A549 (cell line): ENCODE measurements at regions of chr21 and their contacts with region 1.

Region 1: GRCh38 chr21:38355992-38356797 is 99.4 kb downstream of the KCNJ15 start:
- DNase-seq: peak; percentile 58 to 66
- ATAC-seq: peak; percentile 83 to 93; a peak in 5 of 6 replicates
- H3K4me3 ChIP-seq: no peak overlapping the region
- H3K27ac ChIP-seq: peak overlapping the region; percentile 84 to 86
- H3K4me1 ChIP-seq: peaks cover 24% of the 10 kb centered on the region
- CTCF ChIP-seq: peak; percentile 80
- EP300 ChIP-seq: no peak
- POLR2A ChIP-seq: no peak
- RAD21 ChIP-seq: peak; percentile 97 to 98

Region 2: GRCh38 chr21:37563641-37564340 is 792.4 kb before region 1 on chr21:
- CTCF ChIA-PET with region 1: interaction called, 4 read pairs
- POLR2A ChIA-PET with region 1: interaction called, 14 read pairs
- DNase-seq: peak; percentile 66 to 93
- ATAC-seq: peak; percentile 81 to 91
- H3K4me3 ChIP-seq: peak overlapping the region; percentile 61
- H3K27ac ChIP-seq: peak overlapping the region; percentile 96 to 98
- H3K4me1 ChIP-seq: peaks cover 21% of the 10 kb centered on the region
- CTCF ChIP-seq: 0 out of 3 replicates have a peak, but pooled peaks have one; percentile 20
- EP300 ChIP-seq: no peak
- POLR2A ChIP-seq: peak; percentile 76
- RAD21 ChIP-seq: peak in 1 of 2 experiments; percentile 21; a peak in 1 of 5 replicates

Region 3: DNA sequence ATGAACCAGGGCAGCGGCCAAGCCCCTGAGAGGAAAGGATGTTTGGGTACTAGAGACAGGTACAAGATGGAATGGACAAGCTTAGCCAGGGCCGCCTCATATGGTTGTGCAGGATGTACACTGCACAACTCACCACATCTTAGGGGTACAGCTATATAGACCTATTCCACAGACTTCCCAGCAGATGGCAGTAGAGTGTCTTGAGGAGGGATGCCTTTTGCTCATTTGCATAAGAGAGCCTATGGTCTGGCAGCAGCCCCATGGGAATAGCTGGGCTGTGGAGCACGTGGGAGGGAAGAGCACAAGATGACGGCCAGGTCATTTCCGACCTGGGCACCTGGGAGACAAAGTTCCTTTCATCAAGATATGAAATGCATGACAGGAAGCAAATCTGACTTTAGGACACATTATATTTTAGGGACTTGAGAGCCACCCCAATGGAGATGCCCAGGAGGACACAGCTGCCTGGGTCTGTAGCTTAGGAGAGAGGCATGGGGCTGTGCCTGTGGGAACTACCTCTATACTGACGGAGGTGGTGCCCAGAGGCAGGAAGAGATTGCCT is 655.5 kb before region 1 on chr21:
- CTCF ChIA-PET with region 1: interaction called, 17 read pairs
- POLR2A ChIA-PET with region 1: no interaction called
- DNase-seq: peak; percentile 63 to 84
- ATAC-seq: peak; percentile 87 to 98
- H3K4me3 ChIP-seq: no peak overlapping the region
- H3K27ac ChIP-seq: peak overlapping the region; percentile 38 to 70; a peak in 4 of 6 replicates
- H3K4me1 ChIP-seq: peaks cover 9% of the 10 kb centered on the region; the same call in 2 of the 3 replicates
- CTCF ChIP-seq: peak; percentile 54
- EP300 ChIP-seq: no peak
- POLR2A ChIP-seq: no peak
- RAD21 ChIP-seq: peak; percentile 69

Region 4: DNA sequence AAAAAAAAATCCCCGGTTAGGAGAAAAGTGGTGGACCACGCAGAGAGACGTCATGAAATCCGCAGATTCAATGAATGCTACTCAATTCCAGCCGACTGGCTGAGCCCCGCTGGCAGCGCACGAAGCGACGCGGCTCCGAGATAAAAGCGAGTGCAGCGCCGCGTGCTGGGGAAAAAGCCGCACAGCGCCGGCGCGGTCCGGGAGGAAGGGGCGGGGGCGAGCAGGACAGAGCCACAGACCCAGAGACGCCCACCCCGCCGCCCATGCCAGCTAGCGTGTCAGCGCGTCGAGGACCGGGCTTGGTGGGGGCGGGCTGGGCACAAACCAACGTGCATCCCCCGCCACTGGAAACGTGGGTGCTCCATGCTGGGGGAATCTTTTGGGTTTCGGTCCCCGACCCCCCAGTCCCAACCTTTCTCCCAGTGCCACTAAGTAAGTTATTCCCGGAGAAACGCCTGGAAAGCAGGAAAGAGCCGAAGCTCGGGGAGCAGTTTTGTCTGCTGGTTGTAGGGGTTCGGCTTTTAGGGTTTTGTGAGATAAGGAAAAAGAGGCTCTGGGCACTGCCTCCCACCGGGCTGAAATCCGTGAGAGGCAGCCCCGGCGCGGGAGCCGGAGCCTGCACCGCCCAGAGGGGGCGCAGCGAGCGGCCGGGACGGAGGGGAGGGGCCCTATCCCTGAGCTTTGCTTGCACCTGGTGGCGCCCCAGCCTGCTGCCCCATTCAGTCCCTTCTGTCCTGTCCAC is 439.7 kb before region 1 on chr21 and contains the start of gene KCNJ6:
- CTCF ChIA-PET with region 1: interaction called, 14 read pairs
- POLR2A ChIA-PET with region 1: interaction called, 5 read pairs
- DNase-seq: peak; percentile 46 to 58
- ATAC-seq: peak; percentile 92
- H3K4me3 ChIP-seq: peak within 1 kb of the TSS; percentile 59
- H3K27ac ChIP-seq: peak within 1 kb of the TSS; percentile 90 to 91
- H3K4me1 ChIP-seq: peaks cover 46% of the 10 kb centered on the region
- CTCF ChIP-seq: peak; percentile 37
- EP300 ChIP-seq: no peak
- POLR2A ChIP-seq: no peak
- RAD21 ChIP-seq: peak; percentile 57 to 68
- polyA plus RNA-seq, gene KCNJ6: 1.4 and 2.3 TPM in 2 replicates

Region 5: DNA sequence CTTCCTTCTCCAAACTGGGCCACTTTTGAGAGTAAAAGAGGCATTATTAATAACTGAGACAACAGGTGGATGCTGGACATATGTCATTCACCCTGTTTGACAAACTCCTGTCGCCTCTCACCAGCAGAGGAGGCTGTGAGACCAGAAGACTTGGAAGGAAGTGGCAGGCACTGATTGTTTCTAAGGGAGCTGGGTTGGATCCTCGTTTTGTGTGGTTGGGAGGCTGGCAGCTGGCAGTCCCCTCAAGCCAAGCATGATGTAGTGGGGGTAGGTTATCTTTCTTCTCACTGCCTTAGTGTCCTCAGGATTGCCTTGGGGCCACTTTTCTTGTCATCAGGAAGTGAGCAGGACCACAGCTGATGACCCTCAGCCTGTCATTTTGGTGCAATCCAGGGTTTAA is 185.9 kb before region 1 on chr21:
- CTCF ChIA-PET with region 1: interaction called, 81 read pairs
- POLR2A ChIA-PET with region 1: no interaction called
- DNase-seq: peak in 1 of 2 experiments; percentile 57
- ATAC-seq: peak in 1 of 2 experiments; percentile 57; a peak in 3 of 6 replicates
- H3K4me3 ChIP-seq: no peak overlapping the region
- H3K27ac ChIP-seq: peak overlapping the region; percentile 64 to 81
- H3K4me1 ChIP-seq: peaks cover 20% of the 10 kb centered on the region
- CTCF ChIP-seq: peak; percentile 21; the same call in 1 of the 3 replicates
- EP300 ChIP-seq: no peak
- POLR2A ChIP-seq: no peak
- RAD21 ChIP-seq: peak; percentile 49 to 74; a peak in 4 of 5 replicates

Region 6: DNA sequence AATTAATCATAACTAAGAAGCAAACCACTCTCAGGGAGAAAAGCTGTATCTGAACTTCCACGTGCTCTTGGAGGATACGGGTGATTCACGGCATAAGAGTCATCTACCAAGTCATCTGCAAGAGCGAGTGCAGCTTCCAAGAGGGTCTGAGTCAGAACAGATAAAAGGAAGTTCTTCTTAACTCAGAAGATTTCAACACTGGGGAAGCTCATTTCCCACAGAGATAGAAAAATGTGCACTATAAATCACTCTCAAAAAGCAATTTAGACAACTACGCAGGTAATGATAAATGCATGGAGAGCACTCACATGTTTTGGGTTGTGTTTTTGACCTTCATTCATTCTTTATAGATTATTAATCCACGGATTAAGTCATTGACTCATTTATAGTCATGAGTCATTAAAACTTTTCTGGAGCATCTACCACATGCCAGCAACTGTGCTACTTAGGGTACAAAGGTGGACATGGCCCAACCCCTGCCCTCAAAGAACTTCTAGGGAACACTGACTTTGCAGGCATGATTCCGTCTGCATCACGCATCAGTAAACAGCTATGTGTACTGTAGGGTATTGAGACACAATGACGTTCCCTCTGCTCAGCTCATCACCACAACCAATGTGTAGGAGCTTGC is 78.6 kb before region 1 on chr21:
- CTCF ChIA-PET with region 1: interaction called, 30 read pairs
- POLR2A ChIA-PET with region 1: interaction called, 17 read pairs
- DNase-seq: peak; percentile 63 to 96
- ATAC-seq: peak; percentile 97 to 98
- H3K4me3 ChIP-seq: no peak overlapping the region
- H3K27ac ChIP-seq: peak overlapping the region; percentile 90 to 92
- H3K4me1 ChIP-seq: peaks cover 26% of the 10 kb centered on the region
- CTCF ChIP-seq: no peak
- EP300 ChIP-seq: peak; percentile 94 to 97
- POLR2A ChIP-seq: no peak
- RAD21 ChIP-seq: peak in 1 of 2 experiments; percentile 75; a peak in 4 of 5 replicates